GM12878 (cell line): ENCODE measurements at regions of chr4 and their contacts with region 1.

Region 1: GRCh38 chr4:185134307-185134869 is 8.7 kb upstream of the SLC25A4 start:
- DNase-seq: no peak
- ATAC-seq: peak; percentile 91
- H3K4me3 ChIP-seq: no peak overlapping the region
- H3K27ac ChIP-seq: no peak overlapping the region
- H3K4me1 ChIP-seq: no peaks in the 10 kb centered on the region
- H3K27me3 ChIP-seq: no peaks in the 10 kb centered on the region; a peak in 1 of 4 replicates
- CTCF ChIP-seq: peak; percentile 69 to 83 (median 81)
- EP300 ChIP-seq: no peak
- POLR2A ChIP-seq: no peak
- RAD21 ChIP-seq: peak; percentile 79

Region 2: DNA sequence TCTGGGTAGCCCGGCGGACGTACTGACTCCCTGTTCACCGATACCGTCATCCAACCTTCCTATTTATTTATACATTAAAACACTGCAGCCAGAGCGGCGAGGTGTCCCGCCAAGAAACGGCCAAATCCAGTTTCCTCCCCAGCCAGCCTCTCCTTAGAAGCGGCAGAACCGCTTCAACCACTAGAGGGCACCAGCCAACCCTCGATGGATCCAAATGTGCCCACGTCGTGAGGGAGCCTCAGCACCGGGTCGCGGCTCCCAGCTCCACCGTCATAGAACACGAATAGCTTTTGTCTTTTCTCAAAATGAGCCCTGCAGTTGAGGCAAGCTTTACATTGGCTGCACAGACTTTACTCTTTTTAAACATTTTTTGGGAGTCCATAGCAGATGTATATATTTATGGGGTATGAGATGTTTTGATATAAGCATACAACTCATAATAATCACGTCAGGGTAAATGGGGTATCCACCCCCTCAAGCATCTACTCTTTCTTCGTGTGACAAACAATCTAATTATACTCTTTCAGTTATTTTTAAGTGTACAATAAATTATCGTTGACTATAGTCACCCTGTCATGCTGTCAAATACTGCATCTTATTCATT is 129.1 kb before region 1 on chr4:
- CTCF ChIA-PET with region 1: interaction called, 7 read pairs
- POLR2A ChIA-PET with region 1: no interaction called
- RAD21 ChIA-PET with region 1: interaction called, 7 read pairs
- SMC1A ChIA-PET with region 1: interaction called, 4 read pairs
- in situ Hi-C with region 1: loop called (anchors 10 kb)
- intact Hi-C with region 1: loop called (anchors 1 kb)
- DNase-seq: peak; percentile 8
- ATAC-seq: peak; percentile 99
- H3K4me3 ChIP-seq: no peak overlapping the region
- H3K27ac ChIP-seq: no peak overlapping the region
- H3K4me1 ChIP-seq: no peaks in the 10 kb centered on the region
- H3K27me3 ChIP-seq: peaks cover 3 to 5% of the 10 kb centered on the region in 2 experiments; a peak in 2 of 4 replicates
- CTCF ChIP-seq: peak; percentile 89 to 94 (median 94)
- EP300 ChIP-seq: no peak
- POLR2A ChIP-seq: no peak
- RAD21 ChIP-seq: peak; percentile 87

Region 3: GRCh38 chr4:185023471-185023870 is 110.9 kb before region 1 on chr4:
- CTCF ChIA-PET with region 1: interaction called, 10 read pairs
- POLR2A ChIA-PET with region 1: interaction called, 3 read pairs
- RAD21 ChIA-PET with region 1: no interaction called
- SMC1A ChIA-PET with region 1: no interaction called
- in situ Hi-C with region 1: no loop called
- intact Hi-C with region 1: no loop called
- DNase-seq: no peak
- ATAC-seq: no peak
- H3K4me3 ChIP-seq: no peak overlapping the region
- H3K27ac ChIP-seq: no peak overlapping the region
- H3K4me1 ChIP-seq: no peaks in the 10 kb centered on the region
- H3K27me3 ChIP-seq: peaks cover 12 to 16% of the 10 kb centered on the region in 2 experiments
- CTCF ChIP-seq: no peak
- EP300 ChIP-seq: no peak
- POLR2A ChIP-seq: no peak
- RAD21 ChIP-seq: no peak